ENCODE measurements at regions of chr20 and their contacts with region 1.

Region 1: DNA sequence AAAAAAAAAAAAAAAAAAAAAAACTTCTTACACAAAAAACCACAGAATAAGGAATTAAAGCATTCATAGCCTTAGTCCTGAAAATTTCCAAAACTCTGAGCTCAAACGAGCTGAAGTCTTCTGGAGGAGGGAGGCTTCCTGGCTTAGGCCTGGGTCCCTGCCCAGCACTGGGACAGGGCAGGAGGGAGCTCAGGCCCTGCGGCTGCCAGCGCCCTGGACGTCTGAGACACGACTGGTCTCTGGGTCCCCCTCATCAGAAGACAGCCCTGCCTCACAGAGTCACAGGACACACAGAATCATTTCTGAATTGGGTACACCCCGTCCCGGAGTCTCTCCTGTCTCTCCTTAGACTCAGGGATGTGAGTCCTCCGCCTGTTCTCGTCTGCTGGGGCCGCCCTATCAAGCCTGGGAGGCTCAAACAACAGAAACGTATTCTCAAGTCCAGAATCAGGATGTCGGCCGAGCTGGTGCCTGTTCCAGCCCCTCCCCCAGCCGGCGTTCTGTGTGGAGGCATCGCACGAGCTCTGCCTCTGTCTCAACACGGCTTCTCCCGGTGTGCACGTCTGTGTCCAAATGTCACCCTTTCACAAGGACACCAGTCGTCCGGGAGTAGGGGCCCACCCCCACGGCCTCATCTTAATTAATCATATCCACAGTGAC is 39.4 kb downstream of the ZBTB46 start:
- DNase-seq: no peak
- ATAC-seq: no peak
- H3K4me3 Mint-ChIP-seq: no peak overlapping the region
- H3K27ac Mint-ChIP-seq: no peak overlapping the region
- H3K4me1 Mint-ChIP-seq: peaks cover 2% of the 10 kb centered on the region
- H3K27me3 Mint-ChIP-seq: no peaks in the 10 kb centered on the region
- CTCF ChIP-seq: no peak

Region 2: DNA sequence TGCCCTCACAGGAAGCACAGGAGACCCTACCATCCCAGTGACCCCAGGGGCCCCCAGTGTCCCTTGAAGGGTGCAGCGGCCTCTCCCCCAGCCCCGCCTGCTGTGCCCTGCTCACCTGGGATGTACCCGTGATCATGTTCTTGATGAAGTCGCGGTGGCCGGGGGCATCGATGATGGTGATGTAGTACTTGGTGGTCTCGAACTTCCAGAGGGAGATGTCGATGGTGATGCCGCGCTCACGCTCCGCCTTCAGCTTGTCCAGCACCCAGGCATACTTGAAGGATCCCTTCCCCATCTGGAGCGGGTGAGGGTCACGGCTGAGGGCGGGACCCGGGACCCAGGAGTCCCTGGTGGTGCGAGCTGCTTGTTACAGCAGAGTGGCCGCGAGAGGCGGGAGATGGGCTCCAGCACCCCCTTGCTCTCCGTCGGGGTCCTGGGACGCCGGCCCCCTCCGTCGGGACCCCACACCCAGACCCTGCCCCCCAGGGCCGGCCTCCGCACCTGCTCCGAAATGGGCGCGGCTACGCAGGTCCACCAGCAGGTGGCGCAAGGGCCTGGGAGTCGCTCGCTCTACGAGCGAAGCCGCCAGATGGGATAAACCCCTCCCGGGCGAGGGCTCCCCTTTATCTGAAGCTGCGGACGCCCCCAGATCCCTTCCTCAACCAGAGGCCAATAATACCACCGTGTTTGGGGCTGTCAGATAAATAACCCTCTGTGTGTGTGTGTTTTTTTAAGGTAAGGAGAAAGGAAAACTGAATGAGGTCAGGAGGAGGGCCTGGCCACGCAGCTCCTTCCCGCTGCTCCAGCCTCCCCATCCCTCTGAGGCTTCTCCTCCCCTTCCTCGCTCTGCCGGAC is 295.7 kb before region 1 on chr20:
- CTCF ChIA-PET with region 1: interaction called, 4 read pairs
- POLR2A ChIA-PET with region 1: no interaction called
- intact Hi-C with region 1: loop called (anchors 1 kb)
- DNase-seq: peak; percentile 73
- ATAC-seq: peak; percentile 74
- H3K4me3 Mint-ChIP-seq: peak overlapping the region; percentile 59
- H3K27ac Mint-ChIP-seq: no peak overlapping the region
- H3K4me1 Mint-ChIP-seq: peaks cover 4% of the 10 kb centered on the region
- H3K27me3 Mint-ChIP-seq: peaks cover 9% of the 10 kb centered on the region
- CTCF ChIP-seq: peak; percentile 58

Region 3: GRCh38 chr20:63580796-63581461 is 210.7 kb before region 1 on chr20:
- CTCF ChIA-PET with region 1: no interaction called
- POLR2A ChIA-PET with region 1: no interaction called
- intact Hi-C with region 1: loop called (anchors 1 kb)
- DNase-seq: no peak
- ATAC-seq: peak; percentile 98
- H3K4me3 Mint-ChIP-seq: no peak overlapping the region
- H3K27ac Mint-ChIP-seq: no peak overlapping the region
- H3K4me1 Mint-ChIP-seq: peaks cover 5% of the 10 kb centered on the region
- H3K27me3 Mint-ChIP-seq: peaks cover 2% of the 10 kb centered on the region
- CTCF ChIP-seq: no peak

Measured in activated B cell treated with CpG ODN at 0.5 μM for 24 hours (primary cell).